Activated CD4-positive, alpha-beta memory T cell treated with anti-CD3 and anti-CD28 coated beads for 36 hours (primary cell): ENCODE measurements at regions of chr1 and their contacts with region 1.

Region 1: DNA sequence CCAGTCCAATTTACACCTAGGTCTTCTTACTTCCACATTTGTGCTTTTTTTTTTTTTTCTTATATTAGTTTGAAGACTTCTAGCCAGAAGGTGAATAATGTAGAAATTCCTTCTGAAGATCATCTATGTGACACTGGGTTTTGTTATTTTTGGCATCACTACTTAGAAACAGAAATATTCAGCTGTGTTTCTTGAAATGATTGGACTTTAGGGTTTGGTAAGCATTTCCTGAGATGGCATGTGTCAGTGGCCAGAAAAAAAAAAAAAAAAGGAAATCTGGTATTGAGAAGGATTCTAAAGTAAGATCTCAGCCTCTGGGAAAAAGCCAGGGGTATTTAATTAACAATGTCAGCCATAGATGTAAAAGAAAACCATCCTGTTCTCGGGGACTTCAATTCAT is 43.4 kb upstream of the LRRC8C start:
- DNase-seq: no peak
- H3K4me3 Mint-ChIP-seq: no peak overlapping the region
- H3K27ac Mint-ChIP-seq: peak overlapping the region; percentile 69
- H3K4me1 Mint-ChIP-seq: peaks cover 86% of the 10 kb centered on the region
- H3K27me3 Mint-ChIP-seq: no peaks in the 10 kb centered on the region

Region 2: DNA sequence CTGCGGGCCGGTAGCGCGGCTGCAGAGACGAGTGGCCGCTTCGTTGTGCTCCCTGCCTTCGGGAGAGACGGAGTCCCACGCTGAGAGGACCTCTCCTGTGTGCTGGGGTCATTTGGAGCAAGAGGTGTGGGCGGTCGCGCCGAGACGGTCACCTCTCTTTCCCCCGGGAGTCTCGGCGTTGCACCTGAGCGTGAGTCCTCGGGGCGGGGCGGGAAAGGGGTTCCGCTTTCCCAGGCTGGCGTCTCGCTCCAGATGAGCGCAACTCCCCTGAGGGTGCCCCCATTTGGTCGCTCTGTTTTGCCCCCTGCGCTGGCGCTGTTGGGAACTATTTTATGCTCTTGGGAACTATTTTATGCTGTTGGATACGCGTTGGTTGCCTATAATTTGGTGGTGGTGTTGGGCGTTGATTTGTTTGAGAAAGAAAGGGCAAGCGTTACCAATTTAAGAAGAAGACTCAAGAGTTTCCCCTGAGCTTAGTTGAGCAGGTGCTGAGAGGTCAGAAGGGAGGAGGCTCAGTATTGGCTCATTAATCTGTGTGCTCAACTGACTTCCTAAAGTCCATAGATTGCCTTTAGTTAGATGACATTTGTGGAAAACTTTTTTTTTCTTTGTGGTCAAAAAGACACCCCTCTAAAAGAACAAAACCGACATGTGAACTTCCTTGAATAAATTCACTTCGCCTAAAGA is 64.2 kb before region 1 on chr1:
- CTCF ChIA-PET with region 1: no interaction called
- POLR2A ChIA-PET with region 1: no interaction called
- intact Hi-C with region 1: no loop called
- DNase-seq: peak; percentile 52
- H3K4me3 Mint-ChIP-seq: no peak overlapping the region
- H3K27ac Mint-ChIP-seq: no peak overlapping the region
- H3K4me1 Mint-ChIP-seq: peaks cover 32% of the 10 kb centered on the region
- H3K27me3 Mint-ChIP-seq: no peaks in the 10 kb centered on the region

Region 3: GRCh38 chr1:89547563-89548485 is 41.7 kb before region 1 on chr1:
- CTCF ChIA-PET with region 1: no interaction called
- POLR2A ChIA-PET with region 1: interaction called, 4 read pairs
- intact Hi-C with region 1: loop called (anchors 2 kb)
- DNase-seq: peak; percentile 71
- H3K4me3 Mint-ChIP-seq: peak overlapping the region; percentile 30
- H3K27ac Mint-ChIP-seq: peak overlapping the region; percentile 85
- H3K4me1 Mint-ChIP-seq: peaks cover 88% of the 10 kb centered on the region
- H3K27me3 Mint-ChIP-seq: no peaks in the 10 kb centered on the region